ENCODE measurements at regions of chr2 and their contacts with region 1.

Region 1: DNA sequence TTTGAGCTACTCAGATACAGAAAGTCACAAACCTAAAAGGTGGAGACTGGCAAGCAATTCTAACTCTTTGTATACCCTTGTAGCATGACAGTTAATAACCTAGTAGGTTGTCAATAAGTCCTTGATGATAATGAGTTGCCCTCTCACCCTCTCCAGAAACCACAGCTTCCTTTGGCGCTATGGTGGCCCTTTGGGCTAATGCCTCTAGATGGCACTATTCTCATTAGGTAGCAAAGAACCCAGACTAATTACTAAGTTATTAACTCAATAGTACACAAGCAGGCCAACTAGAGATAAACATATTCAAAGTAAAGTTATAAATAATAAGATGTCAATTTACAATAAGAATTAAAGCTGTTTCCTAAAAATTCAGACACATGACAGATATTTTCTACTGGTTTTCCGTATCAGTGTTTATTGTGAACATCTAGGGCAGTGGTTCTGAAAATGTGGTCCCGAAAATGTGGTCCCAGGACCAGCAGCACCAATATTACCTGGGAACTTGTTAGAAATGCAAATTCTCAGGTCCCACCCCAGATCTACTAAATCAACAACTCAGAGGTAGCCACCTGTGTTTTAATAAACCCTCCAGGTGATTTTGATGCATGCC is 41.1 kb downstream of the LDAH start:
- DNase-seq: peak; percentile 36
- ATAC-seq: peak; percentile 86
- H3K4me3 Mint-ChIP-seq: no peak overlapping the region
- H3K27ac Mint-ChIP-seq: no peak overlapping the region
- H3K4me1 Mint-ChIP-seq: no peaks in the 10 kb centered on the region
- H3K27me3 Mint-ChIP-seq: no peaks in the 10 kb centered on the region
- CTCF ChIP-seq: peak; percentile 48

Region 2: DNA sequence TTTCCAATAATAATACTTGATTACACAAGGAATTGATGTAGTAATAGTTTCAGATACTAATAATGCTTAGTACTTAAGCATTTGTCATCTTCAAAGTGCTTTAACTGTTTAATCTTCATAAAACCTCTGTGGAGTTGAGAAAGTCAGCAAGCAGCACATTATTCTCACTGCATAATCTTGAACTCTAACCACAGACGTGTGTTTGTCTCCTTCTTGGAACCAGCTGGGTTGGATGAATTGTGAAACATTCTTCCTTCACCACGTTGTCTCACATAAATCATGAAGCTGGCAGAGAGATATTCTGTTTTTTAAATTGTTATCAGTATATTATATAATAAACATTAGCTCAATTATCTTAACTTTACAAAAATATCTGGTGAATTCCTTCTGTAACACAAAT is 96.2 kb after region 1 on chr2:
- CTCF ChIA-PET with region 1: no interaction called
- POLR2A ChIA-PET with region 1: no interaction called
- DNase-seq: no peak
- ATAC-seq: no peak
- H3K4me3 Mint-ChIP-seq: no peak overlapping the region
- H3K27ac Mint-ChIP-seq: no peak overlapping the region
- H3K4me1 Mint-ChIP-seq: no peaks in the 10 kb centered on the region
- H3K27me3 Mint-ChIP-seq: peaks cover 12% of the 10 kb centered on the region
- CTCF ChIP-seq: no peak

Region 3: GRCh38 chr2:20962939-20963557 is 181.3 kb after region 1 on chr2:
- CTCF ChIA-PET with region 1: interaction called, 49 read pairs
- POLR2A ChIA-PET with region 1: no interaction called
- DNase-seq: peak; percentile 87
- ATAC-seq: peak; percentile 87
- H3K4me3 Mint-ChIP-seq: no peak overlapping the region
- H3K27ac Mint-ChIP-seq: no peak overlapping the region
- H3K4me1 Mint-ChIP-seq: no peaks in the 10 kb centered on the region
- H3K27me3 Mint-ChIP-seq: no peaks in the 10 kb centered on the region; the same call in 1 of the 2 replicates
- CTCF ChIP-seq: peak; percentile 82

Region 4: GRCh38 chr2:21203976-21204375 is 422.2 kb after region 1 on chr2:
- CTCF ChIA-PET with region 1: no interaction called
- POLR2A ChIA-PET with region 1: no interaction called
- DNase-seq: no peak
- ATAC-seq: no peak
- H3K4me3 Mint-ChIP-seq: no peak overlapping the region
- H3K27ac Mint-ChIP-seq: no peak overlapping the region
- H3K4me1 Mint-ChIP-seq: no peaks in the 10 kb centered on the region
- H3K27me3 Mint-ChIP-seq: no peaks in the 10 kb centered on the region
- CTCF ChIP-seq: no peak

Measured in WTC11 (cell line).